Activated CD4-positive, alpha-beta T cell treated with anti-CD3 and anti-CD28 coated beads for 36 hours (primary cell): ENCODE measurements at regions of chr6 and their contacts with region 1.

Region 1: GRCh38 chr6:13328076-13328874 is at the start of gene TBC1D7:
- DNase-seq: peak; percentile 96
- ATAC-seq: peak; percentile 91
- H3K4me3 Mint-ChIP-seq: peak within 1 kb of the TSS; percentile 88
- H3K27ac Mint-ChIP-seq: peak within 1 kb of the TSS; percentile 95
- H3K4me1 Mint-ChIP-seq: peaks cover 17% of the 10 kb centered on the region
- H3K27me3 Mint-ChIP-seq: no peaks in the 10 kb centered on the region
- total RNA-seq, gene TBC1D7: 13.8 to 16.4 TPM

Region 2: DNA sequence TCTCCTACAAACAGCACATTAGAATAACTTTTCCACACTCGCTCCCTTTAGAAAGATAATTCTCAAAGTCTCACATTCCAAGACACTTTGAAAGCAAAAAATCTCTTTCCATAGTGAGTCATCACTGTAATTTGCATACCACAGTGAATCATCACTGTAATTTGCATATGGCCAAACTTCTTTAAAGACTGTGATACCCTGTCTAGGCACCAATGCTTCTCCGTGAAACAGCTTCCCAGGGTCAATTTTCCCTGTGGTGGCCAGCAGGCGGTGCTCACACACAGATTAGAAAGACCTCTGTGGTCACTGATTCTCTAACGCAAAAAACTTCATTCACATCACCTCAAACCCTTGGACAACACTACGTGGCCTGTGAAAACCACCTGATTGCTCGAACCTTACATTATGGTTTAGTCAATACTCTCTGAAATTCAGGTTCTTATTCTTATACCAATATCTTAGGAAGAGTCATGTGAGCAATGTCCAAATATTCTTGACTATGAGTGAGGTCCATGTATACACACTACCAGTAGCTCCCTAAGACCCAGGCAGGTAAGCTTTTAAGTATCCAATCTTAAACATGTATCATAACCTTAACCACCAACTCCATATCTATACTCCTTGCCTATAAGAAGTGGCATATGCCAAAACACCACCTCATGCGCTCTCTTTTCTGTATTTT is 690.2 kb before region 1 on chr6:
- CTCF ChIA-PET with region 1: no interaction called
- POLR2A ChIA-PET with region 1: no interaction called
- intact Hi-C with region 1: loop called in 1 of 2 experiments (anchors 2 kb)
- DNase-seq: peak; percentile 72
- ATAC-seq: peak; percentile 85
- H3K4me3 Mint-ChIP-seq: no peak overlapping the region
- H3K27ac Mint-ChIP-seq: no peak overlapping the region
- H3K4me1 Mint-ChIP-seq: peaks cover 5% of the 10 kb centered on the region
- H3K27me3 Mint-ChIP-seq: peaks cover 30% of the 10 kb centered on the region

Region 3: DNA sequence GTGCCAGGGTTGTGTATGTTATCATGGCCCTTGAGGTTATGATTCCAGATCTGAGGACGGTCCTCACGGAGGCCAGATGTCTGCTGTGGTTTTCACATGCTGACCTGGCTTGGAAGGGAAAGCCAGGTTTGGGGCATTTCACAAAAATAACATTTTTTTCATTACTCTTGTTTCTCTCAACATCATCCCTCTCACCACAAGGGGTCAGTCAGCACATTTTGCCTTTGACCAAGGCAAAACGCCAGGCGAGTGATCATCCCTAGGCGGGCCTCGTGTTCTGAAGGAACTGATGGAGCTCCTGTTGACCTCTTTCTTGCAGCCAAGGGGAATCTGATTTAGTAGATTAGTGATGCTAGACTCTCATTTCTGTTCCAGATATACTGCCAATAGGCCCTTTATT is 133.4 kb before region 1 on chr6:
- CTCF ChIA-PET with region 1: interaction called, 4 read pairs
- POLR2A ChIA-PET with region 1: no interaction called
- intact Hi-C with region 1: loop called (anchors 1 kb)
- DNase-seq: peak; percentile 32
- ATAC-seq: peak; percentile 33
- H3K4me3 Mint-ChIP-seq: no peak overlapping the region
- H3K27ac Mint-ChIP-seq: no peak overlapping the region
- H3K4me1 Mint-ChIP-seq: no peaks in the 10 kb centered on the region
- H3K27me3 Mint-ChIP-seq: peaks cover 9% of the 10 kb centered on the region

Region 4: GRCh38 chr6:13302751-13303667 is 25.3 kb before region 1 on chr6:
- CTCF ChIA-PET with region 1: interaction called, 9 read pairs
- POLR2A ChIA-PET with region 1: interaction called, 9 read pairs
- intact Hi-C with region 1: loop called (anchors 1 to 2 kb)
- DNase-seq: peak; percentile 79
- ATAC-seq: peak; percentile 95
- H3K4me3 Mint-ChIP-seq: no peak overlapping the region
- H3K27ac Mint-ChIP-seq: peak overlapping the region; percentile 94
- H3K4me1 Mint-ChIP-seq: peaks cover 41% of the 10 kb centered on the region
- H3K27me3 Mint-ChIP-seq: no peaks in the 10 kb centered on the region

Region 5: DNA sequence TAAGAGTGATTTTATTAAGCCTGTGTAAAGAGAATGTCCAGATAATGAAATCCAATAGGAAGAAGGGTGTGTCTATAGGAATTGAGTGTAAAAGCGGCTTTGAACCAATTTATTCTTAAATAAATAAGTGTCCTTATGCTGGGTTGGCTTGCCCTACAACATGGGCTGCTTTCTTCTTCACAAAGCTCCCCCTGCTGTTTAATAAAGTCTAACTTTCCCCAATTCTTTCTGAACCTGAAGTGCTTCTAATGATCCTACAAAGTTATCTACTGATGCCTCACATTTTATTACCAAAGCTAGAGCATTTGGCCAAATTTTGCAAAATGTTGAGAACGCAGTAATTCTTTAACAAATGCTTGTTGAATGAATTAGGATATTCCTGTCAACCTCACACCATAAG is 209.8 kb after region 1 on chr6:
- CTCF ChIA-PET with region 1: interaction called, 10 read pairs
- POLR2A ChIA-PET with region 1: no interaction called
- intact Hi-C with region 1: no loop called
- DNase-seq: no peak
- ATAC-seq: no peak
- H3K4me3 Mint-ChIP-seq: no peak overlapping the region
- H3K27ac Mint-ChIP-seq: no peak overlapping the region
- H3K4me1 Mint-ChIP-seq: no peaks in the 10 kb centered on the region
- H3K27me3 Mint-ChIP-seq: no peaks in the 10 kb centered on the region

Region 6: DNA sequence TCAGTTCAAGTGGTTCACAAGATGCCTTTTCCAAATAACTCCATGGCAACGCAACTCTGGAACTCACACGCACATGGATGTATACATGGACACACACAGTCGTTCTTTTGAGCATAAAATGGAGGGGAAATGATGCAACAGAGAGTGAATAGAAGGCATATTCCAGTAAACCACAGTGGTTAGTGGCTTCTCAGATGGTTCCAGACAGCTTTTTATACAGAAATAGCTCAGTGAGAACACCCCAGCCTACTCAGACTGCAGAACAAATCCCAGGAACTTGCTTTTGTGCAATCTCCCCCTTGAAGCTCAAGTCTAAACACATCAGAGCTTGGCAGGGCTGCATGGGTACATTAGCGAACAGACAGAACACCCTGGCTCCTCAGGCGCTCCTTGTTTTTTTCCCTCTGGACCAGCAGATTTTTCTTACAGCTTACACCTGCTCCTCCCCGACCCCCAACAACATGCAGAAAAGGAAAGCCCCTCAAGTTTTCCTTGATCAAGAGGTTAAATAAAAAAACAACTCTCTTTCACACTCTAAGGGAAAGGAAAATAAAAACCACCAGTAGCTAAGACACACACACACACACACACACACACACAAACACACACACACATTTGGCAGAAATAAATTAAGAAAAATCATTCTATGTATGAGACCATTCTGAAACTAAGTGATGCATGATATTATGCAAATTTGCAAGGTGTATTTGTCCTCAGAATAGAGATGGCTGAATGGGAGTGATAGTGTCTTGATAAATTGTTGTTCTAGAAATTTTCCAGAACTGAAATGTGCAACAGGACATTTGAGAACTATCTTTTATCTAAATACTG is 434.6 kb after region 1 on chr6:
- CTCF ChIA-PET with region 1: no interaction called
- POLR2A ChIA-PET with region 1: no interaction called
- intact Hi-C with region 1: no loop called
- DNase-seq: peak; percentile 52
- ATAC-seq: peak; percentile 80
- H3K4me3 Mint-ChIP-seq: peak overlapping the region; percentile 54
- H3K27ac Mint-ChIP-seq: peak overlapping the region; percentile 94
- H3K4me1 Mint-ChIP-seq: peaks cover 45% of the 10 kb centered on the region
- H3K27me3 Mint-ChIP-seq: no peaks in the 10 kb centered on the region

Region 7: GRCh38 chr6:13814176-13814937 is 486.1 kb after region 1 on chr6 and contains the start of gene MCUR1:
- CTCF ChIA-PET with region 1: no interaction called
- POLR2A ChIA-PET with region 1: interaction called, 6 read pairs
- intact Hi-C with region 1: loop called in 1 of 2 experiments (anchors 1 kb)
- DNase-seq: peak; percentile 92
- ATAC-seq: peak; percentile 87
- H3K4me3 Mint-ChIP-seq: peak within 1 kb of the TSS; percentile 85
- H3K27ac Mint-ChIP-seq: peak within 1 kb of the TSS; percentile 87
- H3K4me1 Mint-ChIP-seq: peaks cover 27% of the 10 kb centered on the region
- H3K27me3 Mint-ChIP-seq: no peaks in the 10 kb centered on the region
- total RNA-seq, gene MCUR1: 37.9 to 59.3 TPM